Colonic mucosa (tissue), 4 donors: ENCODE measurements at regions of chr3 and their contacts with region 1.

Region 1: DNA sequence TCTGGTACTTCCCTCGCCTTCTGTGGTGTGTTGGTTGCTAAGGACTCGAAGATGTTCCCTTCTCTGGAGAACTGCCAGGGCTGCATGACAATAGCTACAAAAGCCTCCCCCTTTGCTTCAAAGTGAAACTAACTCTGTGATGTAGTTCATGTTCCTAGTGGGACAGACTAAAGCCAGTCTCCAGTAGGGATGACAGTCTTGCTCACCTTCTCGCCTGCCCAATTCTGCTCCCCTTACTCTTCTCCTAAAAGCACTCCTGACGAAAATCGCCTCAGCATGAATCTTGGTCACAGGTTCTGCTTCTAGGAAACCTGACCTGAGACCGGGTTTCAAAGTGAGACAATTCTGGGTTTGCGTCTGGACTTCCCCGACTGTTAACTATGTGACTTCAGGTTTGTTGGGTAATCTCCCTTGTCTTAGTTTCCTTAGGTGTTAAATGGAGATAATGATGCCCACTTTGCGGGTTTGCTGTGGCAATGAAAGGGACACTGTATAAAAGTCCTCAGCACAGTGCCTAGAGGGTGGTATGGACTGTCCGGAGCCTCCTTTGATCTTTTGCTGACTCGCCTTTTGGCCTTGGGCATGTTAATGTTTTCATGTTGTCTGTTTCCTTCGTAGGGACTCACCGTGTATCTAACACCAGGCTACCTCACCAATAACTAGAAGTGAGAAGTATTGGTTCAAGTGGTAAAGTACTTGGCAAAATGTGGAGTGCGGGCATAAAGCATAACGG is 24.9 kb upstream of the THRB start:
- DNase-seq: no peak
- H3K4me3 ChIP-seq: no peak overlapping the region
- H3K27ac ChIP-seq: no peak overlapping the region
- H3K4me1 ChIP-seq: peaks cover 5% of the 10 kb centered on the region
- H3K27me3 ChIP-seq: peaks cover 8% of the 10 kb centered on the region
- CTCF ChIP-seq: no peak

Region 2: GRCh38 chr3:24640330-24640877 is 120.9 kb after region 1 on chr3:
- intact Hi-C with region 1: loop called (anchors 10 kb)
- DNase-seq: peak; percentile 27
- H3K4me3 ChIP-seq: no peak overlapping the region
- H3K27ac ChIP-seq: no peak overlapping the region
- H3K4me1 ChIP-seq: no peaks in the 10 kb centered on the region
- H3K27me3 ChIP-seq: no peaks in the 10 kb centered on the region
- CTCF ChIP-seq: peak; percentile 57

Region 3: DNA sequence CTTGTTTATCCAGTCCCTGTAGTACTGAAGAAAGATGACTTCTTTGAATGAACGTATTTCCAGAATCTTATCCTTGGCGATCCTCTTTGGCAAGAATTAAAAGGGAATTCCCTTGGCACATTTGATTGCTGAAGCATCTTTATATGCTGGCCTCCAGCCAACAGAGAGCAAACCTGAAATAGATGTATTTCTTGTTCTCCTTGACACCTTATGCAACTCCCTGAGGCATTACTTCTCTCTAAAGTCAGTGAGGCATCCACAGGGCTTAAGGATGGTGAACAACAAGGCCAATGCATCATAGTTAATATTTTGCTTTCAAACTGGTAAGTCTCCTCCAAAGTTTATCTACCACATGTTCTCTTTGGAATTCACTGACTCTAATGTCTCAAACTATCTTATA is 426.0 kb after region 1 on chr3:
- intact Hi-C with region 1: no loop called
- DNase-seq: no peak
- H3K4me3 ChIP-seq: no peak overlapping the region
- H3K27ac ChIP-seq: no peak overlapping the region
- H3K4me1 ChIP-seq: no peaks in the 10 kb centered on the region
- H3K27me3 ChIP-seq: no peaks in the 10 kb centered on the region
- CTCF ChIP-seq: no peak